ENCODE measurements at regions of chr12 and their contacts with region 1.

Region 1: GRCh38 chr12:64551698-64552097 is 58.6 kb upstream of the RASSF3 start:
- DNase-seq: no peak
- ATAC-seq: peak; percentile 26
- H3K4me3 ChIP-seq: no peak overlapping the region
- H3K27ac ChIP-seq: no peak overlapping the region
- H3K4me1 ChIP-seq: no peaks in the 10 kb centered on the region
- H3K27me3 ChIP-seq: no peaks in the 10 kb centered on the region

Region 2: DNA sequence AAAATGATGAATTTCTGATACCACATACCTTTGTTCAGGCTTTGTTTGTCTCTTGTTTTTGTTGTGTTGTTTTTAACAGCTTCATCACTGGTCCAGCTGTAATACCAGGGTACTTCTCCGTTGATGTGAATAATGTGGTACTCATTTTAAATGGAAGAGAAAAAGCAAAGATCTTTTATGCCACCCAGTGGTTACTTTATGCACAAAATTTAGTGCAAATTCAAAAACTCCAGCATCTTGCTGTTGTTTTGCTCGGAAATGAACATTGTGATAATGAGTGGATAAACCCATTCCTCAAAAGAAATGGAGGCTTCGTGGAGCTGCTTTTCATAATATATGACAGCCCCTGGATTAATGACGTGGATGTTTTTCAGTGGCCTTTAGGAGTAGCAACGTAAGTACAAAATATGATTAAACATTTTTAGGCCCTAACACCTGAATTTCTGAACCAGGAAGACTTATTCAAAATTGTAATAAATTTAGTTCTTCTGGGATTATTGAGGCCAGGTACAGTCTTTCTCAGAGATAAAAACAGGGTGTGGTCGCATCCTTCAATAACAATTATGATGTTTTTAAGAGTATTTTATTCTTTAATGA is 749.6 kb before region 1 on chr12:
- intact Hi-C with region 1: no loop called
- DNase-seq: no peak
- ATAC-seq: no peak
- H3K4me3 ChIP-seq: no peak overlapping the region
- H3K27ac ChIP-seq: no peak overlapping the region
- H3K4me1 ChIP-seq: no peaks in the 10 kb centered on the region
- H3K27me3 ChIP-seq: no peaks in the 10 kb centered on the region

Region 3: DNA sequence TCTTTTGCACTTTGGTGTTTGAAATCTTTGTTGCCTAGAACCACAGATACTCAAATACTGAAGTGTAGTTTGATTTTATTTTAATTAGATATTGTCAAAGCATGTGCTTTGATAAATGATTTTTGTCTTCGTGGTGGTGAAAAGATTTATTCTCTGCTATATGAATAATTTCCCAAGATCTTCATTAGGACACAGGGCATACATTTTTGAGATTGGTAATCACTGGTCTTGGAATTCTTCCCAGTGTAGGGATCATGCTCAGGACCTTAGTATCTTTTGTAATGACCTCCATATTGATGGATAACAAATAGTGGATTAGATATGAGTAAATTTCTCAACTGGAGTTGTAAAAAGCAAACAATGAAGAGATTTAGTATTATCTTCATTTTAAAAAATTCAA is 71.5 kb before region 1 on chr12:
- intact Hi-C with region 1: no loop called
- DNase-seq: no peak
- ATAC-seq: no peak
- H3K4me3 ChIP-seq: no peak overlapping the region
- H3K27ac ChIP-seq: no peak overlapping the region
- H3K4me1 ChIP-seq: no peaks in the 10 kb centered on the region
- H3K27me3 ChIP-seq: no peaks in the 10 kb centered on the region

Region 4: GRCh38 chr12:64500394-64500793 is 51.3 kb before region 1 on chr12:
- intact Hi-C with region 1: no loop called
- DNase-seq: no peak
- ATAC-seq: no peak
- H3K4me3 ChIP-seq: no peak overlapping the region
- H3K27ac ChIP-seq: no peak overlapping the region
- H3K4me1 ChIP-seq: no peaks in the 10 kb centered on the region
- H3K27me3 ChIP-seq: no peaks in the 10 kb centered on the region

Region 5: GRCh38 chr12:64696080-64696741 is 144.5 kb after region 1 on chr12:
- intact Hi-C with region 1: loop called (anchors 2 kb)
- DNase-seq: no peak
- ATAC-seq: no peak
- H3K4me3 ChIP-seq: no peak overlapping the region
- H3K27ac ChIP-seq: no peak overlapping the region
- H3K4me1 ChIP-seq: peaks cover 0 to 4% of the 10 kb centered on the region in 2 donors
- H3K27me3 ChIP-seq: no peaks in the 10 kb centered on the region

Region 6: GRCh38 chr12:64877363-64878004 is 325.8 kb after region 1 on chr12:
- intact Hi-C with region 1: no loop called
- DNase-seq: no peak
- ATAC-seq: no peak
- H3K4me3 ChIP-seq: no peak overlapping the region
- H3K27ac ChIP-seq: no peak overlapping the region
- H3K4me1 ChIP-seq: no peaks in the 10 kb centered on the region
- H3K27me3 ChIP-seq: no peaks in the 10 kb centered on the region

Measured in aorta (tissue), 5 donors.